Endothelial cell of umbilical vein (primary cell): ENCODE measurements at regions of chr22 and their contacts with region 1.

Region 1: GRCh38 chr22:24423519-24424000 is 3.8 kb upstream of the ADORA2A start:
- DNase-seq: peak; percentile 44
- H3K4me3 ChIP-seq: peak overlapping the region in 2 of 3 experiments; percentile 34 to 82
- H3K27ac ChIP-seq: no peak overlapping the region
- H3K4me1 ChIP-seq: peaks cover 27% of the 10 kb centered on the region
- H3K27me3 ChIP-seq: no peaks in the 10 kb centered on the region
- CTCF ChIP-seq: peak; percentile 73 to 85
- POLR2A ChIP-seq: no peak

Region 2: GRCh38 chr22:24270638-24271408 is 152.7 kb before region 1 on chr22 and contains the start of gene SPECC1L:
- CTCF ChIA-PET with region 1: no interaction called
- POLR2A ChIA-PET with region 1: no interaction called
- dilution Hi-C with region 1: no loop called
- intact Hi-C with region 1: loop called (anchors 1 kb)
- DNase-seq: peak; percentile 96
- H3K4me3 ChIP-seq: peak within 1 kb of the TSS; percentile 68 to 98 (median 85)
- H3K27ac ChIP-seq: peak within 1 kb of the TSS; percentile 70
- H3K4me1 ChIP-seq: peaks cover 12% of the 10 kb centered on the region
- H3K27me3 ChIP-seq: no peaks in the 10 kb centered on the region
- CTCF ChIP-seq: peak in 1 of 2 donors; percentile 6
- POLR2A ChIP-seq: peak; percentile 99
- total RNA-seq, gene SPECC1L: 63.2 and 79.3 TPM in 2 replicates

Region 3: GRCh38 chr22:24325105-24325757 is 98.3 kb before region 1 on chr22:
- CTCF ChIA-PET with region 1: interaction called, 4 read pairs
- POLR2A ChIA-PET with region 1: no interaction called
- dilution Hi-C with region 1: no loop called
- intact Hi-C with region 1: loop called (anchors 1 kb)
- DNase-seq: peak; percentile 87
- H3K4me3 ChIP-seq: no peak overlapping the region
- H3K27ac ChIP-seq: no peak overlapping the region
- H3K4me1 ChIP-seq: peaks cover 27% of the 10 kb centered on the region
- H3K27me3 ChIP-seq: no peaks in the 10 kb centered on the region
- CTCF ChIP-seq: peak; percentile 64
- POLR2A ChIP-seq: no peak

Region 4: GRCh38 chr22:24402460-24403192 is 20.9 kb before region 1 on chr22:
- CTCF ChIA-PET with region 1: interaction called, 22 read pairs
- POLR2A ChIA-PET with region 1: interaction called, 4 read pairs
- dilution Hi-C with region 1: no loop called
- intact Hi-C with region 1: loop called (anchors 1 kb)
- DNase-seq: peak; percentile 97
- H3K4me3 ChIP-seq: no peak overlapping the region
- H3K27ac ChIP-seq: peak overlapping the region; percentile 78
- H3K4me1 ChIP-seq: peaks cover 53% of the 10 kb centered on the region
- H3K27me3 ChIP-seq: no peaks in the 10 kb centered on the region
- CTCF ChIP-seq: no peak
- POLR2A ChIP-seq: no peak

Region 5: DNA sequence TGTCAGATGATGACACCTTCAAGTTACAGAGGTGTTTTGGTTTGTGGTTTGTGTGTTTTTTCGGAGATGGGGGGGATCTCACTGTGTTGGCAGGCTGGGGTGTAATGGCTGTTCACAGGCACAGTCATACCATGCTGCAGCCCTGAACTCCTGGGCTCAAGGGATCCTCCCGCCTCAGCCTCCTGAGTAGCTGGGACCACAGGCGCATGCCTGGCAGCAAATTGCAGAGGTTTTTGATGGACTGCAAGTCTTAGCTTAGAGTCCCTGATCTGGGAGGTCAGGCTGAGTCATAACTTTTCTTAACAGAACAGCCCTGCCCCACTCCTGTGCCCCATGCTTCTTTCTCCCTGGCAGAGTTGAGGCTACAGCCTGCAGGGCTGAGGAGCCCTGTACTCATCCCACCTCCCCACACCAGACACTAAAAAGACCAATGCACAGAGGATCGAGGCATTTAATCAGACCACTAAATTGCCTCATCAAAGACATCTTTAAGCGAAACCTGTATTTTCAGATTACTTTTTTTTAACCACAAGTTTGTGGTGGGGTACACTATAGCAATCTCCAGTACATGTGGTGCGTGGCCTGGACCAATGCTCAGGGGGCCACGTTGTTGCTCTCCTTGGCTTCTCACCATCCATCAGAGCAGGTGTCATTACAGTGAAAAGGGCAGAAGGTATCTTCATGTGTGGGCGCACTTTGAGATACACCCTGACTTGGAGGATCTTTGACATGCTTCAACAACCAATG is 13.3 kb before region 1 on chr22:
- CTCF ChIA-PET with region 1: interaction called, 22 read pairs
- POLR2A ChIA-PET with region 1: interaction called, 4 read pairs
- dilution Hi-C with region 1: no loop called
- intact Hi-C with region 1: loop called (anchors 1 kb)
- DNase-seq: no peak
- H3K4me3 ChIP-seq: no peak overlapping the region
- H3K27ac ChIP-seq: no peak overlapping the region
- H3K4me1 ChIP-seq: peaks cover 38% of the 10 kb centered on the region
- H3K27me3 ChIP-seq: no peaks in the 10 kb centered on the region
- CTCF ChIP-seq: no peak
- POLR2A ChIP-seq: no peak

Region 6: GRCh38 chr22:24466716-24467328 is 43.3 kb after region 1 on chr22:
- CTCF ChIA-PET with region 1: interaction called, 4 read pairs
- POLR2A ChIA-PET with region 1: no interaction called
- dilution Hi-C with region 1: no loop called
- intact Hi-C with region 1: loop called (anchors 5 kb)
- DNase-seq: peak; percentile 94
- H3K4me3 ChIP-seq: no peak overlapping the region
- H3K27ac ChIP-seq: peak overlapping the region; percentile 76
- H3K4me1 ChIP-seq: peaks cover 29% of the 10 kb centered on the region
- H3K27me3 ChIP-seq: no peaks in the 10 kb centered on the region
- CTCF ChIP-seq: no peak
- POLR2A ChIP-seq: no peak

Region 7: GRCh38 chr22:24525416-24526037 is 102.0 kb after region 1 on chr22:
- CTCF ChIA-PET with region 1: interaction called, 14 read pairs
- POLR2A ChIA-PET with region 1: no interaction called
- dilution Hi-C with region 1: no loop called
- intact Hi-C with region 1: loop called (anchors 1 kb)
- DNase-seq: peak; percentile 72
- H3K4me3 ChIP-seq: no peak overlapping the region
- H3K27ac ChIP-seq: no peak overlapping the region
- H3K4me1 ChIP-seq: peaks cover 9% of the 10 kb centered on the region
- H3K27me3 ChIP-seq: no peaks in the 10 kb centered on the region
- CTCF ChIP-seq: peak; percentile 84 to 89
- POLR2A ChIP-seq: no peak